Ovary (tissue), 10 donors: ENCODE measurements at regions of chr7 and their contacts with region 1.

Region 1: GRCh38 chr7:47991741-47992311 is 12.4 kb upstream of the HUS1 start:
- DNase-seq: peak; percentile 52 to 78 (median 62)
- H3K4me3 ChIP-seq: peak overlapping the region; percentile 37
- H3K27ac ChIP-seq: no peak overlapping the region
- H3K4me1 ChIP-seq: no peaks in the 10 kb centered on the region
- H3K27me3 ChIP-seq: no peaks in the 10 kb centered on the region
- CTCF ChIP-seq: peak in 1 of 3 donors; percentile 47
- EP300 ChIP-seq: no peak
- POLR2A ChIP-seq: no peak

Region 2: DNA sequence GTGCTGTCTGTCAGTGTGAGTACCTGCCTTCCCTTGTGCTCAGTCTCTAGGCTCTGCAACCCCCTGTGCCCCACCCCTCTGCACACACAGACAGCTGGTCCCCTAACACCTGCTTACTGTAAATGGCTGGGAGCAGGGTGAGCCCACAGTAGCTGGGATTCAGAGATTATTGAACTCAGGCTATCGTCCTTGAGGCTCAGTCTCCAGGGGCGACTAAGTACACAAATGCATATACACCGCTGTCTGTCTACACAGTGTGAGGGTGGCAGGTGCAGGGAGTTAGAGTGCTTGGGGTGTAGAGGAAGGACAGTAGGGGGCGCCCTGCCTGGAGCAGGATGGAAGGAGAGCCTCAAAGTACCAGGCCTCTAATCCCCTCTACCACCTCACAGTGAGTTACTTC is 110.1 kb after region 1 on chr7:
- intact Hi-C with region 1: loop called in 2 of 4 experiments (anchors 5 kb)
- DNase-seq: no peak
- H3K4me3 ChIP-seq: no peak overlapping the region
- H3K27ac ChIP-seq: no peak overlapping the region
- H3K4me1 ChIP-seq: no peaks in the 10 kb centered on the region
- H3K27me3 ChIP-seq: no peaks in the 10 kb centered on the region
- CTCF ChIP-seq: no peak
- EP300 ChIP-seq: no peak
- POLR2A ChIP-seq: no peak

Region 3: DNA sequence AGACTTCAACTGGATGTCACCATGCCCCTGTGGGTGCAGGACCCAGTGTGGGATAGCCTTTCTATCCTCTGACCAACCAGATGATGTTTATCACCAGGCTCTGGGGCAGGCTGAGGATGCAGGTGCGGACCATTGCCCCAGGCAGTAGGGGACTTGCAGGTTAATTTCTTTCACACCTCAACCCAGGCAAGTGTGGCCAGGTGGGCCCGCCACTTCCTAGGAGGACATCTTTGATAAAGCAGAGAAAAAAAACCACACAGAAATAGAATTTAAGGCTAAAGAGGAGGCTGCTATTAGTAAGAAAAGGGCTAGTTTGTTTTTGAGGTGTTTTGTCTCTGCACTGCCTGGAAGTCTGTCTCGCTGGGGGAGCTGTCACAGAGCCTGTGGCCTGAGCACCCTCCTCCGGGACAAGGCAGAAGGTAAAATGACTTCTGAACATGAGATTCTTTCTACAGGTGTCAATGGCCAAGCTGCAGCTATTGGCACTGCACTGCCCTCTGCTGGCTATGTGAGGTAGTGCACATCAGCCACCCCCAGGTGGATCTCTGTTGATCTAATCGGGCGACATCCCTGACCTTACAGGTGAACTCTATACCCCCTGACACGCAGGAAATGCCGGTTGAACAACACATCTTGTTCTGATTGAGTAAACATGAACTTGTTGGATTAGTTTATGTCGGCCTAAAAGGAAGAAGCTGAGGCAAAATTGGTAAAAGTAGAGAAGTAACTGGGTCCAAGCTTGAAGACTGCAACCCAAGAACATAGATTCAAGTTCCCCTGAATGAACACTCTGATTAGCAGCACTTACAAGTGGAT is 118.2 kb after region 1 on chr7:
- intact Hi-C with region 1: loop called in 1 of 4 experiments (anchors 5 kb)
- DNase-seq: peak; percentile 46 to 78 (median 74)
- H3K4me3 ChIP-seq: no peak overlapping the region
- H3K27ac ChIP-seq: no peak overlapping the region
- H3K4me1 ChIP-seq: no peaks in the 10 kb centered on the region
- H3K27me3 ChIP-seq: no peaks in the 10 kb centered on the region
- CTCF ChIP-seq: peak; percentile 91 to 96 (median 93)
- EP300 ChIP-seq: no peak
- POLR2A ChIP-seq: no peak